ENCODE measurements at regions of chr14 and their contacts with region 1.

Region 1: GRCh38 chr14:31400031-31400638 is 20.2 kb downstream of the HEATR5A start:
- DNase-seq: no peak
- H3K4me3 Mint-ChIP-seq: no peak overlapping the region
- H3K27ac Mint-ChIP-seq: peak overlapping the region; percentile 36
- H3K4me1 Mint-ChIP-seq: peaks cover 6% of the 10 kb centered on the region
- H3K27me3 Mint-ChIP-seq: no peaks in the 10 kb centered on the region

Region 2: DNA sequence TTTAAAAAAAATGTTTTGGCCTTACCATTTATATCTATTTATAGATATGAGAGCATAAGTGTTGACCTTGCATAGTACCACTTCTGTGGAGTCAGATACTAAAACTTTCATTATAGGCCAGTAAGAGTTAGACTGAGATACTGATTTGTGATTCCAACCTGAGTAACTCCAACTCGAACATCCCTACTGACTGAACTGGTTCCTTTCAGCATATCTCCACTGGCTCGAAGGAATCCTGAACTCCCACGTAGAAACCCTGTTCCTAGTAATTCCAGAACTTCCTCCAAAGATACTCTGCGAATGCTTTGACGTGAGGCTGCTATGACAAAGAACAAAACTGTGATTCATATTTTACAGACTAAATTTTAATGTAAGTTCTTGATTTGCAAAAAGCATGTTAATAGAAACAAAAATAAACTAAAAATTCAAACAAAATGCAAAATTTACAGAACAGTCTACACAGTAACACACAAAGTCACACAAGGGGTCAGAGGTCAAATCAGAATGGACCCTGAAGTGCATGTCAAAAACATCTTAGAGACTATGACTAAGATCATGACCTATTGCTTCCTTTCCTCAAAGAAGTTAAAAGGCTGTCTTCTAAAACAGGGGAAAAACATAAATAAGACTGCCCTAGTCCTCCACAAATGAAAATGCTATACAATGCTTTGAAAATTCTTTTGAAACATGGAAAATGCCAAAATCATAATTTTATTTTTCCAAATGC is 11.3 kb before region 1 on chr14:
- CTCF ChIA-PET with region 1: interaction called, 3 read pairs
- POLR2A ChIA-PET with region 1: no interaction called
- intact Hi-C with region 1: loop called (anchors 1 kb)
- DNase-seq: peak; percentile 37
- H3K4me3 Mint-ChIP-seq: no peak overlapping the region
- H3K27ac Mint-ChIP-seq: peak overlapping the region; percentile 60
- H3K4me1 Mint-ChIP-seq: peaks cover 28% of the 10 kb centered on the region
- H3K27me3 Mint-ChIP-seq: no peaks in the 10 kb centered on the region

Measured in activated CD4-positive, alpha-beta memory T cell treated with anti-CD3 and anti-CD28 coated beads for 36 hours (primary cell).